Activated CD4-positive, alpha-beta T cell treated with anti-CD3 and anti-CD28 coated beads for 36 hours (primary cell): ENCODE measurements at regions of chr4 and their contacts with region 1.

Region 1: GRCh38 chr4:140523857-140524742 is at the start of gene ELMOD2:
- DNase-seq: peak; percentile 99
- ATAC-seq: peak; percentile 100
- H3K4me3 Mint-ChIP-seq: peak within 1 kb of the TSS; percentile 82
- H3K27ac Mint-ChIP-seq: peak within 1 kb of the TSS; percentile 32
- H3K4me1 Mint-ChIP-seq: peaks cover 19% of the 10 kb centered on the region
- H3K27me3 Mint-ChIP-seq: no peaks in the 10 kb centered on the region
- total RNA-seq, gene ELMOD2: 13.2 to 14.3 TPM

Region 2: GRCh38 chr4:139015269-139015947 is 1508.7 kb before region 1 on chr4 and contains the start of gene NOCT:
- CTCF ChIA-PET with region 1: no interaction called
- POLR2A ChIA-PET with region 1: no interaction called
- intact Hi-C with region 1: loop called in 1 of 2 experiments (anchors 2 kb)
- DNase-seq: peak; percentile 98
- ATAC-seq: peak; percentile 92
- H3K4me3 Mint-ChIP-seq: peak within 1 kb of the TSS; percentile 90
- H3K27ac Mint-ChIP-seq: peak within 1 kb of the TSS; percentile 96
- H3K4me1 Mint-ChIP-seq: peaks cover 41% of the 10 kb centered on the region
- H3K27me3 Mint-ChIP-seq: no peaks in the 10 kb centered on the region
- total RNA-seq, gene NOCT: 16.5 to 20.5 TPM

Region 3: GRCh38 chr4:139301113-139301820 is 1222.8 kb before region 1 on chr4 and contains the start of gene NAA15:
- CTCF ChIA-PET with region 1: no interaction called
- POLR2A ChIA-PET with region 1: no interaction called
- intact Hi-C with region 1: loop called (anchors 5 kb)
- DNase-seq: peak; percentile 99
- ATAC-seq: peak; percentile 89
- H3K4me3 Mint-ChIP-seq: peak within 1 kb of the TSS; percentile 98
- H3K27ac Mint-ChIP-seq: peak within 1 kb of the TSS; percentile 96
- H3K4me1 Mint-ChIP-seq: peaks cover 61% of the 10 kb centered on the region
- H3K27me3 Mint-ChIP-seq: no peaks in the 10 kb centered on the region
- total RNA-seq, gene NAA15: 64.3 to 113 TPM

Region 4: GRCh38 chr4:139554893-139555704 is 969.0 kb before region 1 on chr4:
- CTCF ChIA-PET with region 1: no interaction called
- POLR2A ChIA-PET with region 1: no interaction called
- intact Hi-C with region 1: loop called (anchors 5 kb)
- DNase-seq: peak; percentile 91
- ATAC-seq: peak; percentile 76
- H3K4me3 Mint-ChIP-seq: peak overlapping the region; percentile 96
- H3K27ac Mint-ChIP-seq: peak overlapping the region; percentile 91
- H3K4me1 Mint-ChIP-seq: peaks cover 45% of the 10 kb centered on the region
- H3K27me3 Mint-ChIP-seq: no peaks in the 10 kb centered on the region

Region 5: DNA sequence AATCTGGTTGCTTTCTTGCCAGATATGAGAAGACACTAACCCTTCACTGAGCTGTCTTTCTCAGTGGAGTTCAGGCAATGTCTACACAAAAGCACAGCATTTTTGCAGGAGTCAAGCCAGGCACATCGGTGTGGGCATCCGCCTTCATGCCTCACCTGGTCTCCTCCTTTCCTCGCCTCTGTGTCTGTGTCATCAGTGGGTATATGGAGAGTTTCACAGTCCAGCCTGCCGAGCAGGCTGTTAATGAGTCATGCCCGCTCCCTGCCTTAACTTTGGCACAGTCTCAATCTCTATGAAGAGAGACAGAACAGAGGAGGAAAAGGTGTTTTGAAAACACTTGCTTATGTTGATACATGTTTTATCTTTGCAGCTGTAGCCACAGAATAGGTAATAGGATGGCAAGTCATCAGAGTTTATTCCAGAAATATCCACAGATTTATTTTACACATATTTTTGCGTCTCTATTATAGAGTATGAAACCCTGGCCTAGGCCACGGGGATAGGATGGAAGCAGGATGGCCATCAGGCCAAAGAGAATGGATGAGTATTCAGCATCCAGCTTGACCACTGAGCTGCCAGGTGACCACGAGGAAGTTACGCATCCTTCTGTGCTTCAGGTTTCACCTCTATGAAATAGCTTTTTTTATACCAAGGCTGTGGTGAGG is 337.3 kb before region 1 on chr4:
- CTCF ChIA-PET with region 1: no interaction called
- POLR2A ChIA-PET with region 1: no interaction called
- intact Hi-C with region 1: no loop called
- DNase-seq: no peak
- ATAC-seq: no peak
- H3K4me3 Mint-ChIP-seq: no peak overlapping the region
- H3K27ac Mint-ChIP-seq: no peak overlapping the region
- H3K4me1 Mint-ChIP-seq: no peaks in the 10 kb centered on the region
- H3K27me3 Mint-ChIP-seq: no peaks in the 10 kb centered on the region

Region 6: DNA sequence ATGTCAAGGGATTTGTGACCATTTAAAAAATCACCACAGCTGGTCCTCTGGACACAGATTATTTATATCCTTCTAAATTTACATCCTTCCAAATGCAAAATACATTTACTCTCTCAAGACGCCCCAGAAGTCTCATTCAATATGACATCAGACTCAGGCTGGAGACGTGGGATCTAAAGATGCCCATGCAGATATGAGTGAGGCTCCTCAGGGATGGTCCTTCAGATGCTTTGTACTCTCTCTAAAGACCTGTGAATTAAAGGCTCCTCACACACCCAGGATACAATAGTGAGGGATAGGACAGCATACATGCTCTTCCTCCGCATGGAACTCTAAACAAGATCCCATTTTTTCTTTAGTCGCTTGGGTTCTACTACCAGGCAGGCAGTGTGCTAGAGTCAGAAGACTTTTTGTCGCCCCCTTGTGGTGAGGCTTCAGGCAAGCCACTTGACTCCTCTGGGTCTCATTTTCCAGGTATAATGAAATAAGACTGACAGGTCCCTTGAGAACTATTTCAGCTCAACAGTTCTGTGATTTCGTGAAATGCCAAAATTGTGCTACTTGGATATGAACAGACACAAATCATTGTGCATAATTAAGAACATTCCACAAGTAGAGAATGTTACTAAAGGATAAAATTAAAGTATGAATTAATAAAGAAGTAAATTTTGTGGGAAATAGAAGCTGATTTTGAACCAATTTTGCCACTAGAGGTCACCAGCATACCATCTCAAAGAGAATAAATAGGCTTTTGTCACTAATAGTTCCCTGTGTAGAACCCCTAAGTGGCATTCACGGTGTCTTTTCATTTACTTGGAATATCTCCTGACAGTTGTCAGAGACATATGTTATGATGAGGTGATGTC is 164.3 kb before region 1 on chr4:
- CTCF ChIA-PET with region 1: interaction called, 12 read pairs
- POLR2A ChIA-PET with region 1: no interaction called
- intact Hi-C with region 1: no loop called
- DNase-seq: peak; percentile 89
- ATAC-seq: peak; percentile 97
- H3K4me3 Mint-ChIP-seq: no peak overlapping the region
- H3K27ac Mint-ChIP-seq: no peak overlapping the region
- H3K4me1 Mint-ChIP-seq: no peaks in the 10 kb centered on the region
- H3K27me3 Mint-ChIP-seq: peaks cover 3% of the 10 kb centered on the region

Region 7: GRCh38 chr4:140504261-140504660 is 19.8 kb before region 1 on chr4:
- CTCF ChIA-PET with region 1: no interaction called
- POLR2A ChIA-PET with region 1: no interaction called
- intact Hi-C with region 1: no loop called
- DNase-seq: no peak
- ATAC-seq: no peak
- H3K4me3 Mint-ChIP-seq: no peak overlapping the region
- H3K27ac Mint-ChIP-seq: no peak overlapping the region
- H3K4me1 Mint-ChIP-seq: no peaks in the 10 kb centered on the region
- H3K27me3 Mint-ChIP-seq: peaks cover 40% of the 10 kb centered on the region

Region 8: GRCh38 chr4:140609548-140610425 is 85.7 kb after region 1 on chr4:
- CTCF ChIA-PET with region 1: interaction called, 3 read pairs
- POLR2A ChIA-PET with region 1: no interaction called
- intact Hi-C with region 1: loop called (anchors 1 to 2 kb)
- DNase-seq: no peak
- ATAC-seq: peak; percentile 71
- H3K4me3 Mint-ChIP-seq: no peak overlapping the region
- H3K27ac Mint-ChIP-seq: no peak overlapping the region
- H3K4me1 Mint-ChIP-seq: no peaks in the 10 kb centered on the region
- H3K27me3 Mint-ChIP-seq: no peaks in the 10 kb centered on the region